ENCODE measurements at regions of chr4 and their contacts with region 1.

Region 1: GRCh38 chr4:99847362-99847976 is 30.8 kb downstream of the DAPP1 start:
- DNase-seq: peak in 5 of 14 experiments; percentile 6 to 63 (median 57)
- ATAC-seq: peak; percentile 37
- H3K4me3 ChIP-seq: peak overlapping the region; percentile 15
- H3K4me3 Mint-ChIP-seq: peak overlapping the region; percentile 53
- H3K27ac ChIP-seq: peak overlapping the region in 1 of 2 donors; percentile 68
- H3K27ac Mint-ChIP-seq: peak overlapping the region; percentile 86
- H3K4me1 ChIP-seq: peaks cover 35% of the 10 kb centered on the region
- H3K4me1 Mint-ChIP-seq: peaks cover 59% of the 10 kb centered on the region
- H3K27me3 ChIP-seq: no peaks in the 10 kb centered on the region
- H3K27me3 Mint-ChIP-seq: no peaks in the 10 kb centered on the region
- CTCF ChIP-seq: no peak

Region 2: DNA sequence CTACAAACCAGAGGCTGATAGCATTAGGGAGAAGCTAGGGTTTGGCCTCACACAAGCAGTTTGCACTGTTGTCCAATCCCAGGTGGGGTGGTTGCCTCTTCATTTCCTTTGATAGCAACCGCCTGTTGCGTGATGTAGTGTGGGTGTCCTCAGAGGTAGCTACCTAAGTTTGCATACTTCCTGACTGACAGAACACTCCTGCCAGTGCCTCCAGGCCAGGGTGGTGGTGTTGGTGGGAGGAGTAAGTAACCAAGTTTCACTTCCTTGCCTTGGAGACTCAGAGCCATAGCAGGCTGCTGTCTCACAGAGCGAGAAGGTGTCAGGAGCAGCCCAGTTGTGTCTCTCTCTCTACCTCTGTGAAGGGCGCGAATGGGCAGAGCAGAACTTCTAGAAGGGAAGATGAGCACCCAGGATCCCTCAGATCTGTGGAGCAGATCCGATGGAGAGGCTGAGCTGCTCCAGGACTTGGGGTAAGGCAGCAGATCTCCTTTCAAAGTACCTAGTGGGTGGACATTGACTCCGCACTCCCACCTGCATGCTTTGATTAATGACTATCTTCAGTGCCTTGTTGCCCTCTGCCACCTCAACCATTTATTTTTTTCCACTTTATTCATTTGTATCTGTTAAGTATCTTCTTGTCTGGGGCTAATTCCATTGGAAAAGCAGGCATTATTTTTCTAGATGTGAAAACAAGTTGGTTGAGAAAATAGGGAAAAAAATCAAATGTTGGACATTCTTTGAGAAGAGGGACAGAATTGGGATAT is 30.7 kb before region 1 on chr4 and contains the start of gene DAPP1:
- CTCF ChIA-PET with region 1: interaction called, 3 read pairs
- POLR2A ChIA-PET with region 1: interaction called, 35 read pairs
- intact Hi-C with region 1: loop called in 1 of 2 experiments (anchors 2 kb)
- DNase-seq: peak; percentile 60 to 92 (median 72)
- ATAC-seq: peak; percentile 97
- H3K4me3 ChIP-seq: peak within 1 kb of the TSS; percentile 72
- H3K4me3 Mint-ChIP-seq: peak within 1 kb of the TSS; percentile 92
- H3K27ac ChIP-seq: peak within 1 kb of the TSS; percentile 64 to 66
- H3K27ac Mint-ChIP-seq: peak within 1 kb of the TSS; percentile 91
- H3K4me1 ChIP-seq: peaks cover 30% of the 10 kb centered on the region
- H3K4me1 Mint-ChIP-seq: peaks cover 64% of the 10 kb centered on the region
- H3K27me3 ChIP-seq: no peaks in the 10 kb centered on the region
- H3K27me3 Mint-ChIP-seq: no peaks in the 10 kb centered on the region
- CTCF ChIP-seq: no peak
- total RNA-seq, gene DAPP1: 8.3 to 9.1 TPM

Region 3: DNA sequence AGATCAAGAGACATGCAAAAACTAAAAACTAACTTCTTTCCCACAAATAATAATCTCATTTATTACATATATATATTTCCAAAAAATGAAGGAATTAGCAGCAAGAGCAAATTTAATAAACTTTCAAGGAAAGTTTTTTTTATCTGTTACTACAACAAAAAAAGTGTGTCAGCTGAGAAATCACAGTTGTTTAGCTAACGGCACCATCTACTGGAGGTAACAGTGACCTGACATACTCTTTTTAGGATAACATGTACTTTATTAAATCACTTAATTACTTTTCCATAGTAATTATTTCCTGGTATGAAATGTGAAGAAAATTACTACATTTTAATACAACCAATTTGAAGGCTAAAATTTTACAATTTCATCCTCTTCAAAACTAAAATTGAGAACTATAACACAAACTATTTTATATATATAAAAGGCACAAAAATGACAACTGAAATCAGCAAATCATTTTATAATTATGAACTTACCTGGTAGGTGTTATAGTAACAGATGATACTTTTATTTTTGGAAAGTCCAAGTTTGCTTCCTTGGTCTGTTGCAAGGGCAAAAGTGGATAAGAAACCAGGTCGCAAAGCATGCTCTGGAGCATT is 37.7 kb after region 1 on chr4:
- CTCF ChIA-PET with region 1: no interaction called
- POLR2A ChIA-PET with region 1: no interaction called
- intact Hi-C with region 1: loop called (anchors 5 kb)
- DNase-seq: peak in 7 of 14 experiments; percentile 10 to 76 (median 30)
- ATAC-seq: peak; percentile 68
- H3K4me3 ChIP-seq: no peak overlapping the region
- H3K4me3 Mint-ChIP-seq: no peak overlapping the region
- H3K27ac ChIP-seq: no peak overlapping the region
- H3K27ac Mint-ChIP-seq: no peak overlapping the region
- H3K4me1 ChIP-seq: no peaks in the 10 kb centered on the region
- H3K4me1 Mint-ChIP-seq: peaks cover 17% of the 10 kb centered on the region
- H3K27me3 ChIP-seq: no peaks in the 10 kb centered on the region
- H3K27me3 Mint-ChIP-seq: no peaks in the 10 kb centered on the region
- CTCF ChIP-seq: peak; percentile 61

Region 4: DNA sequence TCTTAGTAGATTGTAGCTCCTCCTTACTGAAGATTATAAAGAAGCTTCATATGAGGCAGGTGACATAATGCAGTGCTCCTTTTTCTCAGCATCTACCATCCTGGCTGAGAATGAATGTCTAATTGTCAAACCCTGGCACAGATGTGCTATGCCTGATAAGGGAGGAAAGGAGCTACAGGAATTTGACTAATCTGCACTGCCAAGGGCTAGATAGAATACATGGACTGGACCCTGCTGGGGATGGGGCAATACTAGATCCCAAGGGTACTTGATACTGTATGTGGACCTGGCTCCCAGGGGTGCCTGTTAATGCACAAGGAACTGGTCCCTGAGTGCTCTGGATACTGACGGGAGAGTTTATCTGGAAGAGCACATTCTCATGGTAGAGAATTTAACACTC is 1032.5 kb after region 1 on chr4:
- CTCF ChIA-PET with region 1: no interaction called
- POLR2A ChIA-PET with region 1: no interaction called
- intact Hi-C with region 1: no loop called
- DNase-seq: no peak
- ATAC-seq: no peak
- H3K4me3 ChIP-seq: no peak overlapping the region
- H3K4me3 Mint-ChIP-seq: no peak overlapping the region
- H3K27ac ChIP-seq: no peak overlapping the region
- H3K27ac Mint-ChIP-seq: no peak overlapping the region
- H3K4me1 ChIP-seq: no peaks in the 10 kb centered on the region
- H3K4me1 Mint-ChIP-seq: no peaks in the 10 kb centered on the region
- H3K27me3 ChIP-seq: no peaks in the 10 kb centered on the region
- H3K27me3 Mint-ChIP-seq: no peaks in the 10 kb centered on the region
- CTCF ChIP-seq: no peak